ENCODE measurements at regions of chr7 and their contacts with region 1.

Region 1: DNA sequence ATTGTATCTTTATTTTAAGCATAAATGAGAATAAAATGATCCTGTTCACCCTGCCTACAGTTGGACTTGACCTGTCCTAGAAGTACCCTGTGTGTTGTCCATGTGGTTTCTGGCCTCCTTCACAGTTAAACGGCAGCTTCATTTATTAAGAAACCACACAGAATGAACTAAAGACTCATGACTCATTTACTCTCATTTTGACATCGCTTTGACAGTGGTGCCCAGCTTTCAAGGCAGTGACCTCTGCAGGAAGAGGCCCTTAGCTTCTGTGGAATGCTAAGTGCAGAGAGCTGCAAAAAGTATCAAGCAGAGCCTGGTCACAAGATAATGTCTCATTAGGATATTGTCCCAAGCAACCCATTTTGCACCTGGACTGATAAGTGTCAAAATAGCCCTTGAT is 93.4 kb downstream of the AVL9 start:
- DNase-seq: no peak

Region 2: DNA sequence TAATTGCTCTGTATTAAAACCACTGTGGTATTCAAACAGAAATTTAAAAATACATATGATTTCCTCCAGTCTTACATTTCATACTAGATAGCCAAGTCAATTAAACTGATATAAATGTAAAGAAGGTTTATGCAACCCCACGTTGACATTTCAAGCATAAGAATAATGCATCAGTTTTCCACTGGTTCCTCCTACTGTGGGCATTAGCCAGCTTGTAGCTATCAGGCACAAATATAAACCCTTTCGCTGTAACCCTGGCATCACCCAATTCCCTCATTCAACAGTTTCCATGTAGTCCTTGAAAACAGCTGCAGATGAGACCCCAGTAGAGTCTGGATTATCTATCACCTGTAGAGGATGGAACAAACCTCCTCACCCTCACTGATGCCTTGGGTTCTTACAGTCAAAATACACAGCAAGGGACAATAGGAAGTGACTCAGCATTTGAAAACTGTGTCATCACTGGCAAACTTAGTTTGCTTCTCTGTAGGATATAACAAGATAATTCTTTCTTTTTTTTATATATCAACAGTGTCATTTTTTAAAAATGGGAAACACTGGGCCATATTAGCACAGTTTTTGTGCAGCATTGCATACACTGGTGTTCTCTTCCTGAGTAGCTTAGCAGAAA is 631.5 kb before region 1 on chr7:
- intact Hi-C with region 1: no loop called
- DNase-seq: no peak

Region 3: GRCh38 chr7:32495298-32496176 is 93.1 kb before region 1 on chr7 and contains the start of gene AVL9:
- intact Hi-C with region 1: loop called in 1 of 2 experiments (anchors 10 kb)
- DNase-seq: peak; percentile 99
- total RNA-seq, gene AVL9: 25.5 to 28.8 TPM

Region 4: DNA sequence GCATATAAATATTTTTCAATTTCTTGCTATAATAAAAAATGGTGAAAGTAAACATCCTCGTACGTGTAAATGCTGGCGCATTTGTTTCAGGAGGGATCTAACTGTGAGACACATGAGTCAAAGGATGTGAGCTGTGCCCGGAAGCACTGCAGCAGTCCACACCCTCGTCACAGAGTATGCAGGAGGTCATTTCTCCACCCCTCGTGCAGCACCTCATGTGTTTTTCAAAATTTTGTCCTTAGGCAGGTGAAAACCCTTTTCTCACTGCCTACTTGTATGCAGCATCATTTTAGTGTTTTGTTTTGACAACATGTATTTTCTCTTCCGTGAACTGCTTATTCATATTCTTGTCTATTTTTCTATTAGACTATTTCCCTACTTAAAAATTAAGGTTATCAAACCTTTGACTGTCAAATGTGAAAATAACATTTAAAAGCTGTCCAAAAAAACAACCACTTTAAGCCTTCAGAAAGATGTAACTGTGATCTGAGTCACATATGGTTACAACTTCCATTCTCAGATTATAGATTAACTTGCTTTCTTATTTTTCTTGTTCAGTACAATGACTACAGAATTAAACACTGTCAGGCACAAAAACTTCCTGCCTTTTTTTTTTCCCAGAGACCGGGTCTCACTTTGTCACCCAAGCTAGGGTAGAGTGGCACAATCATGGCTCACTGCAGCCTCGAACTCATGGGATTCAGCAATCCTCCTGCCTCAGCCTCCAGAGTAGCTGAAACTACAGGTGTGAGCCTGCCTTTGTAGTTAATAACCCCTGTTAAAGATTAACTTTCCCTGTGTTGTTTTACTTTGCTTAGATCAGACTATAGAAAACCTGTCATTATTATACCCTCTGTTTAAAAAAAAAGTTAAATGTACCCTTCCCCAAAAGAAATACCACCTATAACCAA is 69.6 kb after region 1 on chr7:
- intact Hi-C with region 1: no loop called
- DNase-seq: no peak

Measured in posterior vena cava (tissue), 2 donors.